Common myeloid progenitor, CD34-positive (primary cell): ENCODE measurements at regions of chr10 and their contacts with region 1.

Region 1: DNA sequence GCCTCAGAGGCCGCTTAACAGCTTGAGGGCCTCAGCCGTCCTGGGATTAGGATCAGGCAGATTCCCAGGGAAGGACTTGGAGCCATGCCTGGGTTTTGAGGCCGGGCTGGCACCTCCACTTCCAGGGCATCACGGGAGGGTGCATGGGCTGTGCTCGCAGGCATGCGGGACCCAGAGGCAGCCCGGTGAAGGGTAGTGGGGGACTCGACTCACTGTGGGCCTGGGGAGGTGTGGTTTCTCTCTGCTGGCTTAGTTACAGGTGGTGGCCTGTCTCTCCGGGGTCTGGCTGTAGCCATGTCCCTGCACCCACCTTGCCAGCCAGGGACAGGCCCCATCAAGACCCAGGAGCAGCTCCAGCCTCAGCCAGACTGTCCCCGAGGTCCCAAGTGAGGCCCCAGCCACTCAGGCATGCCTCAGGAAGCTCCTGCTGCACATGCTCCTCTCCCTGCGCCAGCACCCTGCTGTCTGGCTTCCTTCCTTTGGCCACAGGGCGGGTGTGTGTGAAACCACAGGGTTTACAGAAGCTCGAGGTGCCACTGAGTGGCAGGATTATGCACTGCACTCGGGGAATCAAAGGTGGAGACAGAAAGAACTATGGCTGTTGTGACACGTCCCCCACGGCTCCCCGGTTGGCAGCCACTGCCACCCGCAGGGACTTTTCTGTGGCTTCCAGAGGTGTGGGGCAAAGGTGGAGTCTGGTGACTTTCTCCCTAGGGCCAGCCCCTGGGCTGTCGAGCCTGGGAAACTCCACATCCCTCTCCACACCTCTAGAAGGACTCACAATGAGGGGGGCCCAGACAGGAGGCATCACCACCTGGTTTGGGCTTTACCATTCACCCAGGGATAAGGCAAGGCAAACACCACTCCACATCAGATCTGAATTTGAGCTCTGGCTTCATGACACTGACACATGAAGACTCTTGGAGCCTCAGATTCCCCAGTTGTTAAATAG is 19.7 kb downstream of the GOLGA7B start:
- DNase-seq: peak; percentile 87 to 94 (median 93)
- H3K4me3 ChIP-seq: no peak overlapping the region
- H3K27ac ChIP-seq: no peak overlapping the region
- H3K4me1 ChIP-seq: peaks cover 2 to 12% (median 10%) of the 10 kb centered on the region in 4 experiments
- H3K27me3 ChIP-seq: peaks cover 0 to 22% (median 0%) of the 10 kb centered on the region in 5 experiments

Region 2: GRCh38 chr10:97759158-97759887 is 110.0 kb before region 1 on chr10:
- CTCF ChIA-PET with region 1: interaction called, 62 read pairs
- POLR2A ChIA-PET with region 1: no interaction called
- DNase-seq: peak; percentile 43 to 63 (median 54)
- H3K4me3 ChIP-seq: no peak overlapping the region
- H3K27ac ChIP-seq: no peak overlapping the region
- H3K4me1 ChIP-seq: no peaks in the 10 kb centered on the region
- H3K27me3 ChIP-seq: no peaks in the 10 kb centered on the region

Region 3: DNA sequence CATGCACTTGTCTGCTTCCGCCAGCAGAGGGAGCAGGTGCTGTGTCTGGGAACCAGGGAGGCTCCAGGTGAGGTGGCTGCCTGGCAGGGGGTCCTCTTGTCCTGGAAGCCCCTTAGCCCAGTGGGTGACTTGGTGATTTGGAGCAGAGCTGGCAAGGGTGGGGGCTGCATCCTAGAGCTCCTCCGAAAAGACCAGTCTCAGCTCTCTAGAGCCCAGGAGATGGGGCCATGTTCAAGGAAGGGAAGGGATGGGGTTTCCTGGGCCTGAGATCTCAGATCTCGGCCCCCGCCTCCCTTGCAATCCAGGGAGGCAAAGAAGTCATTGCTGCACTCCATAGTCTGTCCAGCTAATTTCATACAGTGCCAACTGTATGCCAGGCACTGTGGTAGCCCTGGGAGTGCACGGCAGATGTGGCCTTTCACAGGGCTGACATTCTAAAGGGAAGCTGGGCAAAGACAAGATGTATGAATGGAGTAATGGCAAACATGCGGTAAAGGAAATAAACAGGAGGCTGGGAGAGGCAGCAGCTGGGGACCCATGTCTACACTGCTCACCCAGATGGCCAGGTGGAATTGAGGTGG is 77.1 kb before region 1 on chr10:
- CTCF ChIA-PET with region 1: interaction called, 114 read pairs
- POLR2A ChIA-PET with region 1: no interaction called
- DNase-seq: peak; percentile 33 to 67 (median 53)
- H3K4me3 ChIP-seq: no peak overlapping the region
- H3K27ac ChIP-seq: no peak overlapping the region
- H3K4me1 ChIP-seq: peaks cover 0 to 14% (median 10%) of the 10 kb centered on the region in 4 experiments
- H3K27me3 ChIP-seq: peaks cover 0 to 11% (median 2%) of the 10 kb centered on the region in 5 experiments

Region 4: DNA sequence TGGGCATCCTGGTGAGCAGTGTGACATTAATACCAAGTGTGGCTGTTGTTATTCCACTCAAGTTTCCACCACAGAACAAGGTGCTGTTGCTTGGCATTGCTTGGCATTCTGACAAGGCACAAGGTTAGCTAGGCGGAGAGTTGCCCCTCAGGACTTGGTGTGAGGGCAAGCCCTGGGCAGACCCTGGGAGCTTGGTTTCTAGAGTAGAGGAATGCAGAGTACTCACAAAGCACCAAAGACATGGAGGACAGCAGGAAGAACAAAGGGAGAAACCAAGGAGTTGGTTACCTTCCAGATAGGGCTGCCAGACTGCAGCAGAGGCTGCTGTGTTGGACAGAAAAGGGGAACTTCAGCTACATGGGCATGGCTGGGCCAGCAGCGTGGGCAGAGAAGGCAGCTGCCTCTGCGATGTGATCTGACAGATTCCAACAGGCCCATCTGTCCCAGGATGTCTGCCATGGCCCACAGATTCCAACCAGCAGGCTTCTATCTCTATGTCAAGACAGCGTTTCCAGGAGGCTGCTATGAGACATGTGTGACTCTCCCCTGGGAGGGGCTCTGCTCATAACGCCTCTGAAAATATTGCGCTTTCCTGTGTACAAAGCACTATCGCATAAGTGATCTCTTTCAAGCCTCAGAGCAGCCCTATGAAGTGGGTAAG is 17.9 kb before region 1 on chr10:
- CTCF ChIA-PET with region 1: interaction called, 10 read pairs
- POLR2A ChIA-PET with region 1: interaction called, 3 read pairs
- DNase-seq: peak in 2 of 3 donors; percentile 62 to 66
- H3K4me3 ChIP-seq: no peak overlapping the region
- H3K27ac ChIP-seq: no peak overlapping the region
- H3K4me1 ChIP-seq: peaks cover 0 to 13% (median 12%) of the 10 kb centered on the region in 4 experiments
- H3K27me3 ChIP-seq: peaks cover 0 to 77% (median 37%) of the 10 kb centered on the region in 5 experiments

Region 5: DNA sequence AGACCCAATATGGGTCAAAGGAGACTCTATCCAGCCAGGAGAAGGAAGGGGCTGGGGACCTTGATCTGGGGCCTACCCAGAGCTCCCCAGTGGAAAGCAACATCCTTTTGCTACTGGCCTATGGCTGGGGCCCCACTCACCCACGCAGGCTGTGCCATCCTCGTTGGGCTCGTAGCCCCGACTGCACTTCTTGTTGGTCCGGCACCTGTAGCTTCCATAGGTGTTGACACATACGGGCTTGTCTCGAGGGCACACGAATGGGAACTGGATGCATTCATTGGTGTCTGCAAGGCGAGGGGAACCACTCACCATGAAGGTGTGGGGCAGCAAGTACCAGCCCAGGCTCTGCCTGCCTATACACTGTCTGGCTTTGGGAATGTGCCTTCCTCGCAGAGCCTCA is 10.7 kb after region 1 on chr10:
- CTCF ChIA-PET with region 1: interaction called, 10 read pairs
- POLR2A ChIA-PET with region 1: no interaction called
- DNase-seq: no peak
- H3K4me3 ChIP-seq: no peak overlapping the region
- H3K27ac ChIP-seq: no peak overlapping the region
- H3K4me1 ChIP-seq: no peaks in the 10 kb centered on the region
- H3K27me3 ChIP-seq: peaks cover 0 to 15% (median 4%) of the 10 kb centered on the region in 5 experiments

Region 6: GRCh38 chr10:98101366-98101765 is 232.0 kb after region 1 on chr10:
- CTCF ChIA-PET with region 1: no interaction called
- POLR2A ChIA-PET with region 1: no interaction called
- DNase-seq: no peak
- H3K4me3 ChIP-seq: no peak overlapping the region
- H3K27ac ChIP-seq: no peak overlapping the region
- H3K4me1 ChIP-seq: no peaks in the 10 kb centered on the region
- H3K27me3 ChIP-seq: peaks cover 3 to 41% (median 8%) of the 10 kb centered on the region in 5 experiments